ENCODE measurements at regions of chr7 and their contacts with region 1.

Region 1: DNA sequence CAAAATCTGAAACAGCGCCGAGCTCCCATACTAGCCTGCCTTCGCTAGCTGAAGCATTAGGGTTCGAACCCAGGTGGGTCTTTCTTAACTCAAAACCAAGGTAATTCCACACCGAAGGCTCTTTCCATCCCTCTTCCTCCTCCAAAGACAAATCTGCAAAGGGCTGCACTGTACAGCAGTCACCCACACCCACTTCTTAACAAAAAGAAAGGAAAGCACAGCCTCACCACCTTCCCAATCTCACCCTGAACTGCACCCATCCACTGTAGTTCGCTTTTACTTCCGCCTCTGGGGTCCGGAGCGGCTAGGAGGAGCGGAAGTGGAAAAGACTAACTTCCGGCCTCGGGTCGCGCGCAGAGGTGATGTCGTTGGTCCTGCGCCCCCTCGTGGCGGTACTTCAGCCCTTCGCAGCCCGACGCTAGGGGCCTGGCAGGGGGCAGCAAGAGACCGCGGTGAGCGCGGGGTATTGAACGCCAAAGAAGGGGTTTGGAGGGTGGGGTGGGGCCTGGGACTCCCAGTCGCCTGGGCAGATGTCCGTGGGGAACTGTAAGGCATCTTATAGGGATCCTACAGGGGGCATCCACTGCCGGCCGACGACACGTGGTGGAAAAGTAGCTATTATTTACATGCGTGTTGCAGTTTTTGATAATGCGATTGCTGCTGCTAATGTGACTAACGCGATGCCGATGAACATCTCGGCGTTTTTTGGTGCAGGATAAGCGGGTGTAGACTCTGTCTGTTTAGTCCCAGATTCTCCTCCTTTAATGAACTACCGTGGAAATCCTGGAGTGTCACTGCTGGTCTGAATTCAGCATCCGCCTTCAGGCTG is at the start of gene MTERF1:
- DNase-seq: peak; percentile 86 to 98 (median 94)

Region 2: DNA sequence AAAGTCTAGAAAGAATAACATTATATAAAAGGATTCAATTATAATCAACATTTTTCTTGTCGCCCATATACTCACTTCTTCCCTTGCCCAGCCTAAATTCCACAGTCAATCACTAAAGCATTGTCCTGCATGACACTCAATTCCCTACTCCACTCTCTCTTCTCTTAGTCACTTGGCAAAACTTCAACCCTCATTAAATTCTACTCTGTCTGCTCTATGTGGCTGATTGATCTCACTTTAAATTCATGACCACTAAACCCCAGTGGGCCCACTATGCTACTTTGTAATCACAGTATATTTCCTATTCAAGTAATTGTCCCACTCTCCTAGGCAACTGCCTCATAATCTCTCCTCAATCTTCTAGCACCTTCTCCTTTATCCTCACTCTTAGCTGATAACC is 54.2 kb before region 1 on chr7:
- intact Hi-C with region 1: loop called (anchors 1 kb)
- DNase-seq: no peak